ENCODE measurements at regions of chr11 and their contacts with region 1.

Region 1: GRCh38 chr11:8018484-8019313 is 31.6 kb downstream of the EIF3F start:
- DNase-seq: peak; percentile 90
- H3K4me3 Mint-ChIP-seq: peak overlapping the region; percentile 75
- H3K27ac Mint-ChIP-seq: peak overlapping the region; percentile 51
- H3K4me1 Mint-ChIP-seq: peaks cover 11% of the 10 kb centered on the region
- H3K27me3 Mint-ChIP-seq: peaks cover 55% of the 10 kb centered on the region

Region 2: GRCh38 chr11:8584511-8584910 is 565.8 kb after region 1 on chr11:
- intact Hi-C with region 1: loop called (anchors 10 kb)
- DNase-seq: no peak
- H3K4me3 Mint-ChIP-seq: no peak overlapping the region
- H3K27ac Mint-ChIP-seq: no peak overlapping the region
- H3K4me1 Mint-ChIP-seq: no peaks in the 10 kb centered on the region
- H3K27me3 Mint-ChIP-seq: peaks cover 36% of the 10 kb centered on the region